HepG2 (cell line): ENCODE measurements at regions of chr11 and their contacts with region 1.

Region 1: DNA sequence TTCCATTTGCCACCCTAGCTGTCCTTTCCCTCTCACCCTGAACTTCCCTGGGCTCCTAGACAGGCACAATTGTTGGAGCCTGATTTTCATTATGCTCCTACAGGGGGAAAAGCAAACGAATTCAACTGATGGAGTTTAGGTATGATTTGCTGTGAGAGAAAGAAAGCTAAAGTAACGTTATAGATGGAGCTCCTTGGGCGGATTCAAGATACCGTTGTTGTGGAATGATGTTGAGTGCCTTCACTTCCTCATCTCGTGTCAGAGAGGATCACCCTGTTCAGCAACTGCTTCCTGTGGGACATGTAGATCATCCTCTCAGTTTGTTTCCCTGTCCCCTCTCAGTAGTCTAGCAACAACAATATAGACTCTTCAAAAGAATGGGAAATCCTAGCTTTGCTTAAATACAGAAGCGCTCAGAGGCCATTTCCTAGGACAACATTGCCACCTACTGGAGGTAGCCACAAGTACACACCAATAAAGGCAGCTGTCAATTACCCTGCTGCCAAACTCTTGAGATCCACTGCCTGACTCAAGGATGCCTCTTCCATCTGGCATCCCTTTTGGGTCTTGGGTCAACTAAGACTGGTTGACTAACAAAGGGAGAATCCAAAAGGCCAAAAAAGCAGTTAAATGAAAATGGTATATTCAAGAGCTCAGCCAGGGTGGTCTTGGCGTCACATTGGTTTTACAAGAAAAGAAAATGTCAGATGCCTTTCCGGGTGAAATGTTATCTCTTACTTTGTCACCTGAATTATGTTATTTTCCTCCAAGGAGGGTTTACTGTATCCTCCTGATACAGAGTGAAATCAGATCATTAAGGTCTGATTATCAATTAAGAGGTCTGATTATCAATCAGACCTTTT is 13.5 kb upstream of the DTX4 start:
- DNase-seq: peak; percentile 56
- ATAC-seq: peak; percentile 95
- H3K4me3 ChIP-seq: no peak overlapping the region
- H3K27ac ChIP-seq: no peak overlapping the region
- H3K4me1 ChIP-seq: no peaks in the 10 kb centered on the region
- H3K27me3 ChIP-seq: no peaks in the 10 kb centered on the region; a peak in 1 of 5 replicates
- CTCF ChIP-seq: peak; percentile 89
- EP300 ChIP-seq: no peak
- POLR2A ChIP-seq: no peak
- RAD21 ChIP-seq: peak; percentile 65

Region 2: GRCh38 chr11:58958500-58958899 is 199.9 kb before region 1 on chr11:
- CTCF ChIA-PET with region 1: no interaction called
- POLR2A ChIA-PET with region 1: no interaction called
- in situ Hi-C with region 1: no loop called
- intact Hi-C with region 1: loop called (anchors 1 kb)
- DNase-seq: peak; percentile 23
- ATAC-seq: 0 out of 3 replicates have a peak, but pooled peaks have one; percentile 41
- H3K4me3 ChIP-seq: no peak overlapping the region
- H3K27ac ChIP-seq: no peak overlapping the region
- H3K4me1 ChIP-seq: no peaks in the 10 kb centered on the region
- H3K27me3 ChIP-seq: no peaks in the 10 kb centered on the region
- CTCF ChIP-seq: peak; percentile 57
- EP300 ChIP-seq: no peak
- POLR2A ChIP-seq: no peak
- RAD21 ChIP-seq: no peak

Region 3: GRCh38 chr11:59097113-59097708 is 61.2 kb before region 1 on chr11:
- CTCF ChIA-PET with region 1: interaction called, 18 read pairs
- POLR2A ChIA-PET with region 1: no interaction called
- in situ Hi-C with region 1: no loop called
- intact Hi-C with region 1: loop called (anchors 1 kb)
- DNase-seq: peak; percentile 60
- ATAC-seq: peak; percentile 77
- H3K4me3 ChIP-seq: no peak overlapping the region
- H3K27ac ChIP-seq: no peak overlapping the region
- H3K4me1 ChIP-seq: no peaks in the 10 kb centered on the region
- H3K27me3 ChIP-seq: no peaks in the 10 kb centered on the region
- CTCF ChIP-seq: peak; percentile 73
- EP300 ChIP-seq: no peak
- POLR2A ChIP-seq: no peak
- RAD21 ChIP-seq: no peak

Region 4: GRCh38 chr11:59142530-59143507 is 15.6 kb before region 1 on chr11 and contains the start of gene FAM111A:
- CTCF ChIA-PET with region 1: interaction called, 15 read pairs
- POLR2A ChIA-PET with region 1: interaction called, 10 read pairs
- in situ Hi-C with region 1: no loop called
- intact Hi-C with region 1: loop called (anchors 1 kb)
- DNase-seq: peak; percentile 78
- ATAC-seq: peak; percentile 94
- H3K4me3 ChIP-seq: peak within 1 kb of the TSS; percentile 79 to 82 (median 81)
- H3K27ac ChIP-seq: peak within 1 kb of the TSS; percentile 74
- H3K4me1 ChIP-seq: peaks cover 50% of the 10 kb centered on the region
- H3K27me3 ChIP-seq: no peaks in the 10 kb centered on the region
- CTCF ChIP-seq: peak; percentile 74
- EP300 ChIP-seq: no peak
- POLR2A ChIP-seq: peak; percentile 49; a peak in 3 of 4 replicates
- RAD21 ChIP-seq: peak; percentile 46; the same call in 1 of the 2 replicates
- total RNA-seq, gene FAM111A: 13.5 and 17.0 TPM in 2 replicates

Region 5: DNA sequence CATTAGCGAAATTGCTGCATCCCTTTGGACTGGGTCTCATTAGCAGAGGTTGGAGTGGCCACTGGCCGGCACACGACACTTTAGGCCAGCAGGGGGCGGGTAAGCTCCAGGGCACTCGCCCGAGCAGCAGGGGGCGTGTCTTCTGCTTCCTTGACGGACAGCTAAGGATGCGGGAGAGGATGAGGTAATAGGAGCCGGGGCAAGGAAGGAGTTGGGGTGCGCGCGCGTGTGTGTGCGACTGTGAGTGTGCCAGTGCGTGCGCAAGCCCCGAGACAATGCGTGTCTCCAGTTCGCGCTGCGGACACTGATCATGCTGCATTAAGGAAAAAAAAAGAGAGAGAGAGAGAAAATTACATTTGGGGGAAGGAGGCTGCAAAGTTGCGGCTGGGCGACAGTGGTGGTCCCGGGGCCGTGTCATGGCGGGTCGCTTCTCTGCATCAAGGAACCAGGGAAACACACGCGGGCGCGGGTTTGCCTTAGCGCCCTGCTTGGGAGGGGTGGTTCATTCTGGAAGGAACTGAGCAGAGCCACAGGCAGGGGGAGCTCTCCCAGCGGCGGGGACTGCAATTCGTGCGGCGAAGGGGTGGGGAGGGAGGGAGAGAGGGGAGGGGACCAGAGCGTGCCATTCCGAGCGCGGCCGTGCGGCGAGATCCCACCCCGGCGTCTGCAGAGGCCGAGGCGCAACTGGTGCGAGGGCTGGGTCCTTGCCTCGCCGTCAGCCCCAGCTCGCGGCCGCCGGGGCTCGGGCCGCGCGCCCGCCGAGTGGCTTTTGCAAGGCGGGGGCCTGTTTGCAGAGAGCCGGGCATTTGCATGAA is 13.3 kb after region 1 on chr11 and contains the start of gene DTX4:
- CTCF ChIA-PET with region 1: no interaction called
- POLR2A ChIA-PET with region 1: no interaction called
- in situ Hi-C with region 1: no loop called
- intact Hi-C with region 1: no loop called
- DNase-seq: peak; percentile 81
- ATAC-seq: peak; percentile 76
- H3K4me3 ChIP-seq: peak within 1 kb of the TSS; percentile 67 to 80 (median 68)
- H3K27ac ChIP-seq: no peak within 1 kb of the TSS
- H3K4me1 ChIP-seq: peaks cover 41% of the 10 kb centered on the region
- H3K27me3 ChIP-seq: no peaks in the 10 kb centered on the region; a peak in 1 of 5 replicates
- CTCF ChIP-seq: peak; percentile 91
- EP300 ChIP-seq: no peak
- POLR2A ChIP-seq: no peak
- RAD21 ChIP-seq: peak; percentile 92
- total RNA-seq, gene DTX4: 5.6 and 6.9 TPM in 2 replicates

Region 6: DNA sequence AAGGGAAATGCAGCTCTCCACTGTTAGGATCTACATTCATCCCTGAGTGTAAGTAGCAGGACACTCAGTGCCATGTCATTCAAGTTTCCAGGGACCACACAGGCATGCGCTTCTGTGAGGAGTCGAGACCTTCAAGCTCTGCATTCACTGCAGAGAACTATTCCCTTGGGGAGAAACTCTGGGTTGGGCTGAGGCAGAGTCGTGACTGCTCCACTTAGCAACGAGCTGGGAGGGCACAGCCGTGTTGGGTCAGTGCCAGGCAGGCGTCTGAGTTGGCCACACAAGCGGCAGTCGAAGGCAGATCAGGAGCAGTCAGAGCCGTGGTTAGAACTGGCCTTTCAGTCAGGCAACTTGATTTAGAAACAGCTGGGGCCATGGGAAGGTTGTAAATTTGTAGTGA is 39.6 kb after region 1 on chr11:
- CTCF ChIA-PET with region 1: no interaction called
- POLR2A ChIA-PET with region 1: no interaction called
- in situ Hi-C with region 1: no loop called
- intact Hi-C with region 1: no loop called
- DNase-seq: no peak
- ATAC-seq: no peak
- H3K4me3 ChIP-seq: no peak overlapping the region
- H3K27ac ChIP-seq: no peak overlapping the region
- H3K4me1 ChIP-seq: peaks cover 9% of the 10 kb centered on the region; the same call in 1 of the 2 replicates
- H3K27me3 ChIP-seq: no peaks in the 10 kb centered on the region
- CTCF ChIP-seq: no peak
- EP300 ChIP-seq: no peak
- POLR2A ChIP-seq: no peak
- RAD21 ChIP-seq: no peak

Region 7: DNA sequence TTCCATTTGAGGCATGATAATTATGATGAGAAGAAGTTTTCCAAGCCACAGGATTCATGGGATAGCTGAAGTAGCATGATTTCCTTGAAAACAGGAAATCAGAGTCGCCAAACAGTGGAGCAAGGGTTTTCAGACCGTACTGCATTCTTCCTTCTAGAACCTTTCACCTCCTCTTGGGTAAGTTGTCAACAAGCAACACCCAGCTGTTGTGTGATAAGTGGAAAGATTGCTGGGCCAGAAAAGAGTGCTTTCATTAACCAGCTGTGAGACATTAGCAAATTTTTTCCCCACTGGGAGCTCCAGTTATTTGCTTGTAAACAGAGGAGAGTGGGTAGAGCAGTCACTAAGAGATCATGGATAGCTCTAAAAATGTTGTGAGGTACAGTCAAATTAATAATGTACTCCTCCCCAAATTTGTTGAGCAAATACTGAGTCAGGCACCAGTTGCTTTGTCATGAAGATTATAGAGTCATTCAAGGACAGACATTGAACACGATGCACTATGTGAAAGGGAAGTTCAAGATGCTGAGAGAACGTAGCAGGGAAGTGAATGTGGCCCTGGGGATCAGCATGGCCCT is 66.0 kb after region 1 on chr11:
- CTCF ChIA-PET with region 1: no interaction called
- POLR2A ChIA-PET with region 1: no interaction called
- in situ Hi-C with region 1: no loop called
- intact Hi-C with region 1: no loop called
- DNase-seq: no peak
- ATAC-seq: no peak
- H3K4me3 ChIP-seq: no peak overlapping the region
- H3K27ac ChIP-seq: no peak overlapping the region
- H3K4me1 ChIP-seq: no peaks in the 10 kb centered on the region
- H3K27me3 ChIP-seq: peaks cover 0 to 2% of the 10 kb centered on the region in 2 experiments; a peak in 1 of 5 replicates
- CTCF ChIP-seq: no peak
- EP300 ChIP-seq: no peak
- POLR2A ChIP-seq: no peak
- RAD21 ChIP-seq: no peak

Region 8: DNA sequence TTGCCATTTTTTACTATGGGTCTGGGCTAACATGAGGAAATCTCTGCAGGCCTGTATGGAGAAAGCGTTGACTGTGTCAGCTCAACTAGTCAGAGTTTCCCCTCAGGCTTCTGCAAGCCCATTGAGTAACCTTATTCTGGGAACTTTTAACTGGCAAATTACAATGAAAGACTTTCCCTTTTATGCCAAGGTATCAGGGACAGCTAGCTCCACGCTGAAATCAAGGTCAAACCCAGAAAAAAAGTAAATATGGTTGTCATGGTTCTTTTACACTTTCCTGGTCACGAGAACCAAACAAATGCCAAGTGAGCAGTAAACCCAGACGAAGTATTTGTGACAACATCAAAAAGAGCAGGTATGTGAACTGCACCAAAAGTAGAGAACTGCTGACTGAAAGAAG is 443.4 kb after region 1 on chr11:
- CTCF ChIA-PET with region 1: no interaction called
- POLR2A ChIA-PET with region 1: no interaction called
- in situ Hi-C with region 1: no loop called
- intact Hi-C with region 1: no loop called
- DNase-seq: peak; percentile 20
- ATAC-seq: no peak
- H3K4me3 ChIP-seq: no peak overlapping the region
- H3K27ac ChIP-seq: no peak overlapping the region
- H3K4me1 ChIP-seq: no peaks in the 10 kb centered on the region
- H3K27me3 ChIP-seq: no peaks in the 10 kb centered on the region
- CTCF ChIP-seq: no peak
- EP300 ChIP-seq: no peak
- POLR2A ChIP-seq: no peak
- RAD21 ChIP-seq: no peak